Activated CD8-positive, alpha-beta T cell treated with anti-CD3 and anti-CD28 coated beads, Interleukin-2, amount 10 ng/mL, durations not matched to agents 7 days and 5 days (primary cell): ENCODE measurements at regions of chr4 and their contacts with region 1.

Region 1: DNA sequence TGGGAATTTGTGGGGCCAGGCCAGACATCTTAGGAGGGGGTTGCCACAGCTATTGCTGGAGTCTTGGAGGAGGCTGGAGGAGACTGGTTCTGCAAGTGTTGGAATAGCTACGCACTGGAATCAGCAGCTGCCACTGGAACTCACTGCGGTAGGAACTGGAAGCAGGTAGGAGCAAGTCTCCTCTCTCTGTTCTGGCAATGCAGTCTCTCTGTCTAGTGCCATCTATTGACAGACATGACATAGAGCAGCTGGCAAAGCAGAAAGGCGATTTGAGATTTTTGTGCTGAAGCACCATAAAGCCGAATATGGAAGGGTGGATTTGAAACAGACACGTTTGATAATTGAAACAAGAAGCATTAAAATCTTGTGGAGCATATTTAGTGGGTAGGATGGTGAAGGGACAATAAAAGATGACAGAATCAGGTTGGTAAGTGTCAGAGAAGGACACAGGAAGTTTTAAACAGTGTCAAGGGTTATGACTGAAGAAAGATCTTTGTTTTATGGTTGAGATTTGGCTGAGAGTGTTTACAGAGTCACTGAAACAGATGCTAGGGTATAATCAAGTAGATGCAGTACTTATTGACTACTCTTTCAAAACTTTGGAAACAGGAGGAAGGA is 23.5 kb upstream of the SYNPO2 start:
- DNase-seq: peak; percentile 31
- ATAC-seq: no peak
- H3K4me3 Mint-ChIP-seq: no peak overlapping the region
- H3K27ac Mint-ChIP-seq: no peak overlapping the region
- H3K4me1 Mint-ChIP-seq: no peaks in the 10 kb centered on the region
- H3K27me3 Mint-ChIP-seq: no peaks in the 10 kb centered on the region

Region 2: GRCh38 chr4:118772081-118772766 is 93.0 kb before region 1 on chr4:
- CTCF ChIA-PET with region 1: interaction called, 19 read pairs
- POLR2A ChIA-PET with region 1: no interaction called
- DNase-seq: no peak
- ATAC-seq: peak; percentile 76
- H3K4me3 Mint-ChIP-seq: no peak overlapping the region
- H3K27ac Mint-ChIP-seq: no peak overlapping the region
- H3K4me1 Mint-ChIP-seq: no peaks in the 10 kb centered on the region
- H3K27me3 Mint-ChIP-seq: no peaks in the 10 kb centered on the region

Region 3: DNA sequence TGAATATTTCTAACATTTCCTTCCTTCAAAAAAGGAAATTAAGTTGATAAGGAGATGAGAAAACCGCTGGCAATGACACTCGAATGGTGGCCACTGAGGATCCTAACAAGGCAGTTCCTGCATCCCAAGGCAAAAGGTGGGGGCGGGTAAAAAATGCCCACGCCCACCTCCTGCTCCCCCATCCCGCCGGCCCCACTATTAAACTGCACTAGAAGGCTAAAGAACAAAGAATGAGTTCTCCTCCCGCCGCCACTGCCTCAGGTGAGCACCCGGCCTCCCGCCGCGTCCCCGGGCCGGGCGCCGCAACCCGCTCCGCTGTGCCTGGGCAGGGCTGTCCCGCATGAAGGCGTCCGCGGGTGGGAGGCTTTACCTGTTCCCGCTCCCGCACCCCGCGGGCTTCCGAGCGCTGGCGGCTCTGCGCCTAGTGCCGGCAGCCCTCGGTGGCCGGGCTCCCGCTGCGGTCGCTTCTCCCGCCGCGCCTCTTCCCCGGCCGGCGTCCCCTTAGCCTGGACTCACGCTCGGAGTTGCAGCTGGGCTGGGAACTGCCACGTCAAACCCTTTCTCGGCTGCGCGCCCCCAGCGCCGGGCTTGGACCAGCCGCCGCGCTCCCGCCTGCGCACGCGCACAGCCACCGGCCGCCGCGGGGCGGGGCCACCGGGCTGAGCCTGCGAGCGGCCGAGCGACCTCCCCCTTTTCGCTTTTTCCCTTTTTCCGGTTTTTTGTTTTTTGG is 29.5 kb before region 1 on chr4 and contains the start of gene SEC24D:
- CTCF ChIA-PET with region 1: interaction called, 19 read pairs
- POLR2A ChIA-PET with region 1: no interaction called
- DNase-seq: peak; percentile 84
- ATAC-seq: peak; percentile 88
- H3K4me3 Mint-ChIP-seq: peak within 1 kb of the TSS; percentile 94
- H3K27ac Mint-ChIP-seq: peak within 1 kb of the TSS; percentile 95
- H3K4me1 Mint-ChIP-seq: peaks cover 24% of the 10 kb centered on the region
- H3K27me3 Mint-ChIP-seq: peaks cover 4% of the 10 kb centered on the region
- total RNA-seq, gene SEC24D: 29.5 to 32.7 TPM

Region 4: DNA sequence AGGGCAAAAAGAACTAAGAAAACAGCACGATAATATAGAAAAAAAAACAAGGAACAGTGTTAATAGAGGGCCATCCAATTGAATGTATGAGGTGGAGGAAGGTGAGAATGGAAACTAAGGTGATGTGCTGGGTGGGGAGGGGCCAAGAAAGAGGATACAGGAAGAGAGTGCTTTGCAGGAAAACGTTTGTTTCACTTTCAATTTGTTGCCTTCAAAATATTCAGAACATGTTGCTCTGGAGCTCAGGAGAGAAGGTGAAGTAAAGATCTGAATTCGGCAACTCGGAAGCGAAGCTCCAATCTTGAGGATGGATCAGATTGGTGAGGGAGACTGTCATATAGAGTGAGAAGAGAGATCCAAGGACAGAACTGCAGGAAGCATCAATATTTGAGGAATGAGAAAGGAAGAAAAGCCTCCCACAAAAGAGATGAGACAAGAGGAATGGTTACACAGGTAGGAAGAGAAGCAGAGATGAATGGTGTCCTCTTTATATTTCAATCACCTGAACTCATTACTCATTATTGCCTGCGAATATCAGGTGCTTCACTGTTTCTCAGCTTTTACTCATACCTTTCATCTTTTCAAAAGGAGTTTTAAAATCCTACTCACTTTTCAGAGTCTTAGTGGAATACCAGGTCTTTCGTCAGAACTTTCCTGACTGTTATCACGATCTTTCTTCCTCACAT is 14.6 kb before region 1 on chr4:
- CTCF ChIA-PET with region 1: interaction called, 31 read pairs
- POLR2A ChIA-PET with region 1: no interaction called
- DNase-seq: peak; percentile 68
- ATAC-seq: peak; percentile 97
- H3K4me3 Mint-ChIP-seq: peak overlapping the region; percentile 86
- H3K27ac Mint-ChIP-seq: peak overlapping the region; percentile 92
- H3K4me1 Mint-ChIP-seq: peaks cover 24% of the 10 kb centered on the region
- H3K27me3 Mint-ChIP-seq: peaks cover 7% of the 10 kb centered on the region

Region 5: GRCh38 chr4:118888666-118889311 is 23.6 kb after region 1 on chr4 and contains the start of gene SYNPO2:
- CTCF ChIA-PET with region 1: interaction called, 10 read pairs
- POLR2A ChIA-PET with region 1: no interaction called
- DNase-seq: peak; percentile 56
- ATAC-seq: peak; percentile 92
- H3K4me3 Mint-ChIP-seq: peak within 1 kb of the TSS; percentile 73
- H3K27ac Mint-ChIP-seq: no peak within 1 kb of the TSS
- H3K4me1 Mint-ChIP-seq: peaks cover 14% of the 10 kb centered on the region
- H3K27me3 Mint-ChIP-seq: peaks cover 43% of the 10 kb centered on the region
- total RNA-seq, gene SYNPO2: 0.60 to 0.74 TPM